ENCODE measurements at regions of chrX and their contacts with region 1.

Region 1: GRCh38 chrX:10660171-10660570 is 39.8 kb upstream of the MID1 start:
- DNase-seq: no peak
- H3K4me3 ChIP-seq: no peak overlapping the region
- H3K27ac ChIP-seq: no peak overlapping the region
- H3K4me1 ChIP-seq: no peaks in the 10 kb centered on the region
- H3K27me3 ChIP-seq: no peaks in the 10 kb centered on the region
- CTCF ChIP-seq: no peak

Region 2: GRCh38 chrX:9919632-9920172 is 740.5 kb before region 1 on chrX:
- CTCF ChIA-PET with region 1: no interaction called
- POLR2A ChIA-PET with region 1: interaction called, 17 read pairs
- intact Hi-C with region 1: no loop called
- DNase-seq: no peak
- H3K4me3 ChIP-seq: no peak overlapping the region
- H3K27ac ChIP-seq: no peak overlapping the region
- H3K4me1 ChIP-seq: no peaks in the 10 kb centered on the region
- H3K27me3 ChIP-seq: no peaks in the 10 kb centered on the region
- CTCF ChIP-seq: no peak

Region 3: DNA sequence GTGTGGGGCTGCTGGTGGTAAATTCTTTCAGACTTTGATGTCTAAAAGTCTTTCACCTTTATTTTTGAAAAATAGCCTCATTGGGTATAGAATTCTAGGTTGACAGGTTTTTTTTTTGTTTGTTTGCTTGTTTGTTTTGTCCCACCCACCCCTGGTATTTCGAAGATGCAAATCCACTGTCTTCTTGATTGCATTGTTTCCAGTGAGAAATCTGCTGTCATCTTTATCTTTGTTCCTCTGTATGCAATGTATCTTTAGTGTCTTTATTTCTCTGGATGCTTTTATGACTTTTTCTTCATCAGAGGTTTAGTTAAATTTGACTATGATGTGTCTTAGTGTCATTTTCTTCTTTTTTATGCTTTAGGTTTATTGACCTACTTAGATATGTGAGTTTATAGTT is 429.6 kb after region 1 on chrX:
- CTCF ChIA-PET with region 1: no interaction called
- POLR2A ChIA-PET with region 1: no interaction called
- intact Hi-C with region 1: no loop called
- DNase-seq: no peak
- H3K4me3 ChIP-seq: no peak overlapping the region
- H3K27ac ChIP-seq: no peak overlapping the region
- H3K4me1 ChIP-seq: no peaks in the 10 kb centered on the region
- H3K27me3 ChIP-seq: no peaks in the 10 kb centered on the region
- CTCF ChIP-seq: no peak

Measured in A673 (cell line).